Posterior cingulate gyrus (tissue), 11 donors: ENCODE measurements at regions of chr5 and their contacts with region 1.

Region 1: DNA sequence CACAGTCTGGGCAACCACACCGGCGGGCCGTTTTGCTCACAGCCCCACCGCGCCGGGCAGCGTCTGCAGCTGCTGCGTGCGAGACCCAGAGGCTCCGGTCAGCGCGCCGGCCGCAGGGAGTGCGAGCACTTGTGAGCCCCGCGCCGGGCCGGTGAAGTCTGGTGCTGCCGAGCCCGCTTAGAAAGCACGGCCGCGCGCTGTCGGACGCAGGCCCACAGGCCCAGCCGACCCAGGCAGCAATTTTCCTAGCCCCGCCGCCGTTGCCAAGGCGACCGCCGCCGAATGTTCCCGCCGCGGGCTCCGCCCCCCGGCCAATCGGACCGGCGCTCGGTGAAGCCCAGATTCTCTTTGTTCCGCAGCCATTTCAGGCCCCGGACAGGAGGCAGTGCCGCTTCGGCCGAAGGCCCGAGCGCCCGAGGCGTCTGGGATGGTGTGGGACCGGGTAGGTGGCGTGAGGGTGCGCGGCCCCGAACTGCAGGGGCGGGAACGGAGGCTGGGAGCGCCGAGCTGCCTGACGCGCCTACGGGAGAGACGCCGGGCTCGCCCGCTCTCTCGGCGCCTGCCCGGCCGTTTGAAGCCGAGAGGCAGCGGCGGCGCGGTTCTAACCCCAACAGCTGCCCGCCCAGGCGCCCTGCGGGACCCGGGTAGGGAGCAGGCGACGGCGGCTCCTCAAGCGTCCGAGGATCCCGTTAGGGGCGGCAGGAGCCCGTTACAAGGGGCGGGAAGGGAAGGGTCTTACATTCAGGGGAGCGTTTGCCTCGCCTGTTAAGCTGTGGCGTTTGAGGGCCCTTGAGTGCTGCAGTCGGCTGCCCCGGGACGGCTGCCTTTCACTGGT is at the start of gene TNPO1:
- DNase-seq: peak; percentile 80 to 98 (median 90)

Region 2: DNA sequence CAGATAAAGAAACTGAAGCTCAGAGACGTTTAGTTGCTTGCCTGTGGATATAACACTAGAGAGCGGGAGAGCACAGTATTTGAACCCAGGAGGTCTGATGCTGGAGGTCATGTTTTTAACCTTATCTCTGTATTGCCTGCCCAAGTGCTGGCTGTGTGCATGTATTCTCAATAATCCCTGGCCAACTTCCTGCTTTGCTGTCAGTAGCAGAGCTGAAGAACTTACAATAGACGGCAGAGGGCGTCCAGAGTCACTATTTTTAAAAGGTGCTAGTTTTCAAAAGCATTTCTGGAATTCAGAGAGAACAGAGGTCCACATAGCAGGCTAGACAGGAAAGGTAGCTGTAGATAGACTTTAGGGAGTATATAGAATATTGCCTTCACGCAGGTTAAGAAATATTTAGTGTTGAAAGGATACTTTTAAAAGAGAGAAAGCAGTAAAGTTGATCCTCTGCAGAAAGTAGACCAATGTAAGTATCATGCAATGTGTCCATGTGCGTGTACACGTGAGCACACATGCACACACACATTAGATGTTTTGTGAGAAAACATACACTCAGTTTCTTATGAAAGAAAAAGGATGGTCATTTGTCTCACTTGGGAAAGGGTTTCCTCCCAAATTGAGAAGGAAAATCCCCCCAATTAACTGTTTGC is 450.1 kb before region 1 on chr5:
- intact Hi-C with region 1: loop called (anchors 5 kb)
- DNase-seq: peak in 6 of 10 donors; percentile 29 to 87 (median 46)

Region 3: DNA sequence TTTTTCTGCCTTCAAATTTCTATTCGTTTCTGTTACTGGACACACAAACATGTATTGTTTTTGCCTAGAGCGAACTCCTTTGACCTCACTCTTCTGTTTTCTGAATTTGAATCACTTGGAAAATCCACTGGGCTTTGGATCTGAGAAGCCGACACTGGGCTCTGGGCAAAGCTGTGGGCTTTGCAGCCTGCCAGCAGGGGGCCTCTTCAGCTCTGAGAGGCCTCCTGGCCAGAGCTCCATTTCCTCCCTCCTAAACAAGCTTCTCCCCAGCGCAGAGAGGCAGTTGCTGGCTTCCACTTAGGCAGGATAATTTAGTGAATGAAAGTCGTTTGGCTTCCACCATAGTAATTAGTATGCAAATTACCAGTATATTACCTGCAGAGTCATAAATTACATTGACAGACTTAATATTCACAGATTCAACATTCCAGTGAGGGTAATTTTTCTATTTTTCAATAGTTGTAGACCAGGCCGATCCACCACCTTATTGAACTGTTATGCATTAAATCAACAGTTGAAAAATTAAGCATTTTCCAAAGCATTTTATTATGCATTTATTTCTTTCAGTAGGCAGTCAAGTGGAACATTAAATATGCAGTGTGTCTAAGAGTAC is 205.3 kb before region 1 on chr5:
- intact Hi-C with region 1: loop called (anchors 2 kb)
- DNase-seq: peak; percentile 72 to 98 (median 82)

Region 4: GRCh38 chr5:72847989-72848473 is 31.5 kb after region 1 on chr5:
- intact Hi-C with region 1: loop called (anchors 1 kb)
- DNase-seq: peak; percentile 92 to 99 (median 96)

Region 5: GRCh38 chr5:72955768-72956323 is 139.3 kb after region 1 on chr5 and contains the start of gene FCHO2:
- intact Hi-C with region 1: loop called (anchors 2 kb)
- DNase-seq: peak; percentile 93 to 99 (median 96)

Region 6: DNA sequence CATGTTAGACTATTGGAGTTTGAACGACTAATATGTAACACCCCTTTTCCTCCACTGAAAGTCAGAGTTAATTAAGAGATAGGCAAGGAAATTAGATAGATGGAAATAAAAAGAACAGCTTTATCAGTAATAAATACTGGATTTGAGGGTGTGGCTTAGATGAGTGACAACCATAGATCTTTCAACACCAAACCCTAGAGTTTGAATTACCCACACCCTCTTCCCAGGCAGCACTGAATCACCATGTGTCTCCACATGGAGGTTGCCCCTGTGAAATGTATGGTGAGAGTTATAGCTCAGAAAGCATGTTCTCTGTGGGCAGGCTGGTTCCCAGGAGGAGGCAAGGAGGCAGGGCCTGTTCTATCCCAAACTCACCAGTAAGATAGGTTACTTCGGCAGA is 426.2 kb after region 1 on chr5:
- intact Hi-C with region 1: no loop called
- DNase-seq: no peak